Activated CD4-positive, alpha-beta T cell treated with anti-CD3 and anti-CD28 coated beads for 36 hours (primary cell): ENCODE measurements at regions of chr13 and their contacts with region 1.

Region 1: GRCh38 chr13:110340812-110341444 is 33.8 kb downstream of the COL4A2 start:
- DNase-seq: peak; percentile 87
- ATAC-seq: peak; percentile 96
- H3K4me3 Mint-ChIP-seq: peak overlapping the region; percentile 29
- H3K27ac Mint-ChIP-seq: peak overlapping the region; percentile 78
- H3K4me1 Mint-ChIP-seq: peaks cover 25% of the 10 kb centered on the region
- H3K27me3 Mint-ChIP-seq: peaks cover 13% of the 10 kb centered on the region

Region 2: DNA sequence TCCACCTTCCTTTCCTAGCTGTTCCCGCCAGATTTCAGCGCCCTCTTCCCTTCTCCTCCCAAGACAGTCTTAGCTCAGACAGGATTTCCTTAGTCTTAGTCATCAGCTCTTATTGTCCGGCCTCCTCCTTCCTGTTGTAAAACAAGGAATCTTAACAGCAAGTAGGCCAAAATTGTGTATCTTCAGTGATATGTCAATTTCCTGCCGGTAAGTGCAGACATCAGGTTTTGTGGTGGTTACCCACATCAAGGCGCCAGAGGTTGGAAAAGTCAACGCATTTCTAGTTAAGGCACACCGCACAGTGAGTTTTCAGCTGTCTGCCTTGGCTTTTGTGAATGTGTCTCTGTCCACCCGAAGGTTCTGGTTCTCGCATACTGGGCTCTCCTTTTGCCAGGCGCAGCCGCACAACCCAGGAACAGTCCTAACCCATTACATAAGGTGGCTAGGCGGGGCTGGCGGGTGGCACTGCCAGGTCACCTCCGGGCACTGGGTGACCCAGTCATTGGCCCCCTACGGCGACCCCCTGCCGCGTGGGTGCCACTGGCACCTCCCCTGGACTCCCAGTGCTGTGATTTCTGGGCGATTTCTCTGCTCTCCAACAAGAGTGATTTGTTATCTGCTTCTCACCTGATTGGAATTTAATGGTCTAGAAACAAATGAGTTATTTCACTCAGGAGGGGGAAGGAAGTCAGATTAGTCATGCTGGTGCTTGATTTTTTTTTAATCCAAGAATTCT is 21.0 kb before region 1 on chr13:
- CTCF ChIA-PET with region 1: no interaction called
- POLR2A ChIA-PET with region 1: no interaction called
- intact Hi-C with region 1: loop called in 1 of 2 experiments (anchors 2 kb)
- DNase-seq: peak; percentile 83
- ATAC-seq: peak; percentile 79
- H3K4me3 Mint-ChIP-seq: no peak overlapping the region
- H3K27ac Mint-ChIP-seq: no peak overlapping the region
- H3K4me1 Mint-ChIP-seq: peaks cover 14% of the 10 kb centered on the region
- H3K27me3 Mint-ChIP-seq: peaks cover 38% of the 10 kb centered on the region